ENCODE measurements at regions of chr14 and their contacts with region 1.

Region 1: GRCh38 chr14:74762917-74763802 is at the start of gene YLPM1:
- DNase-seq: peak; percentile 86
- ATAC-seq: peak; percentile 95
- H3K4me3 Mint-ChIP-seq: peak within 1 kb of the TSS; percentile 90
- H3K27ac Mint-ChIP-seq: peak within 1 kb of the TSS; percentile 90
- H3K4me1 Mint-ChIP-seq: peaks cover 55% of the 10 kb centered on the region
- H3K27me3 Mint-ChIP-seq: no peaks in the 10 kb centered on the region
- CTCF ChIP-seq: no peak
- total RNA-seq, gene YLPM1: 68.5 and 85.9 TPM in 2 replicates

Region 2: DNA sequence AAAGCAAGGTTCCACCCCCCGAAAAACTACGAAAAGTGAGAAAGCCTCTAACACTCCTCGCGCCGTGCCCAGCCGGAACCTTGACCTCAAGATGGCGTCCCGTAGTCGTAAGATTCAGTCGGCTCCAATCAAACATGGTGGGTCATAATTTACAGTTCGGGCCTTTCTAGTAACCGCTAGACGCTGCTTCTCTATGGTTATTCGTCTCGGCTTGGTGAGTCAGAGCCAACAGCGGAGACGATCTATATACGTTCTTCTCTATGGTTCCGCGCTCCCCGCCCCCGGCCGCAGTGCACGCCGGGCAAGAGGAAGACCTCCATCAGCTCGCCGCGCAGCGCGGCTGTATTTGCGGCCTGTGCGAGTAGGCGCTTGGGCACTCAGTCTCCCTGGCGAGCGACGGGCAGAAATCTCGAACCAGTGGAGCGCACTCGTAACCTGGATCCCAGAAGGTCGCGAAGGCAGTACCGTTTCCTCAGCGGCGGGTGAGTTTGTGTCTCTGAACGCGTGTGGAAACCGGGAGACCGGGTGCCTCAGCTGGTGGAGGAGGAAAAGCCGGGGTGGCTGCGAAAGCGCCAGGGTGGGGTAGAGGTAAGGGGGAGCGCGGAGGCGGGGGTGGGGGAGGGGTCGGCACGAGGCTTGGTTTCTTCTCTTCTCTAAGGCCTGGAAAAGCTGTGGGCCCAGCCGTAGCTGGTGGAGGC is 1704.8 kb before region 1 on chr14 and contains the start of gene RBM25:
- CTCF ChIA-PET with region 1: no interaction called
- POLR2A ChIA-PET with region 1: no interaction called
- intact Hi-C with region 1: loop called (anchors 5 kb)
- DNase-seq: peak; percentile 90
- ATAC-seq: peak; percentile 93
- H3K4me3 Mint-ChIP-seq: no peak within 1 kb of the TSS
- H3K27ac Mint-ChIP-seq: no peak within 1 kb of the TSS
- H3K4me1 Mint-ChIP-seq: peaks cover 42% of the 10 kb centered on the region
- H3K27me3 Mint-ChIP-seq: no peaks in the 10 kb centered on the region
- CTCF ChIP-seq: no peak
- total RNA-seq, gene RBM25: 114 and 123 TPM in 2 replicates

Region 3: DNA sequence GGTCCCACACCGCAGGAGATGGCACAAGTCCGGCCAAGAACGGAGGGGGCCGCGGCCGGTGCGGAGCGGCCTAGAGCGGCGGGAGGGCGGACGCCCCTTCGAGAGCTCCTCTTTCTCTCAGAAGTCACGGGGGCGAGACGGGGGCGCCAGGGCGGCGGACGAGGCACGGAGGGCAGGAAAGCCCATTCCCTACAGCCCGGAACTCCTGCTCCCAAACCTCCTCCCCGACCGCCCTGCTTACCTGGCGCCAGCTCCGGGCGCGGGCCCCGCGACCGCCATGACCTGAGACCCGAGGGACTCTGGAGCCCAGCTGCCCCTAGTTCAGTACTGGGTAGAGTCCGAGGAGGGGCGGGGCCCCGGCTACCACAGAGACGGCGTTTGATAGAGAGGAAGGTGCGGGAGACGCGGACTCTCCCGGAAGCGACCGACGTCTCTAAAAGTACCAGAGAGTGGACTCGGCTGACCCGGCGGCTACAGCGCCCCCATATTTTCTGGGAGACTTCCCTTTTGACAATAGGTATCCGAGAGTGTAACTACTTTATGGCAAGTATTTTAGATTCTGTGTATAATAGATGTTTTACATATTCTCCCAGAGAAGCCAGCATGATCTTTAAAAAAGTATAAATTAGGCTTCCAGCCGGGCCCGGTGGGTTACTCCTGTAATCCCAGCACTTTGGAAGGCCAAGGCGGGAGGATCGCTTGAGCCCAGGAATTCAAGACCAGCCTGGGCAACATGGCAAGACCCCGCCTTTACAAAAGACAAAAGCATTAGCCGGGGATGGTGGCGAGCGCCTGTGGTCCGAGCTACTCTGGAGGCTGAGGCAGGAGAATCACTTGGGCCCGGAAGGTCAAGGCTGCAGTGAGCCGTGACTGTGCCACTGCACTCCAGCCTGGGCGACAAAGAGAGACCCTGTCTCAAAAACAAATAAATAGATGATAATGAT is 460.3 kb before region 1 on chr14 and contains the start of gene ABCD4:
- CTCF ChIA-PET with region 1: no interaction called
- POLR2A ChIA-PET with region 1: interaction called, 4 read pairs
- intact Hi-C with region 1: loop called (anchors 1 kb)
- DNase-seq: peak; percentile 84
- ATAC-seq: peak; percentile 97
- H3K4me3 Mint-ChIP-seq: peak within 1 kb of the TSS; percentile 96
- H3K27ac Mint-ChIP-seq: peak within 1 kb of the TSS; percentile 94
- H3K4me1 Mint-ChIP-seq: peaks cover 26% of the 10 kb centered on the region
- H3K27me3 Mint-ChIP-seq: no peaks in the 10 kb centered on the region
- CTCF ChIP-seq: no peak
- total RNA-seq, gene ABCD4: 58.2 and 78.4 TPM in 2 replicates

Region 4: DNA sequence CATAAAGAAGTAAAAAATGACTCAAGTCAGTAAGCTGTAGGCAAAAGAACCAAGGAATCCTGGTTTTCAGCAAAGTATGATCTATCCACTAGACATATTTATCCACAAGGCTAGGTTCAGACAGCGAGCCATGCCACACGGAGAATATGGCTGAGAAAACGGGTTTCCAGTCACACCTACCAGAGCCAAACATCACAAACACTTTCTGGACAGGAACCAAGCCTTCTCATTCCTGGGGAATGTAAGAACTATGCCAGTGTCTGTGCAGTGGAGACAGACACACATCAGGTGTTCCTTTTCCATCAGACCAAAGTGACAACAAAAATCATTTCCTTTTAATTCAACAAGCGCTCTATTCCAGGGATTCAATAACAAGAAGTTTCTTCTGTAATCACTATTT is 91.4 kb before region 1 on chr14:
- CTCF ChIA-PET with region 1: no interaction called
- POLR2A ChIA-PET with region 1: no interaction called
- intact Hi-C with region 1: no loop called
- DNase-seq: no peak
- ATAC-seq: no peak
- H3K4me3 Mint-ChIP-seq: no peak overlapping the region
- H3K27ac Mint-ChIP-seq: no peak overlapping the region
- H3K4me1 Mint-ChIP-seq: no peaks in the 10 kb centered on the region
- H3K27me3 Mint-ChIP-seq: no peaks in the 10 kb centered on the region
- CTCF ChIP-seq: no peak

Region 5: DNA sequence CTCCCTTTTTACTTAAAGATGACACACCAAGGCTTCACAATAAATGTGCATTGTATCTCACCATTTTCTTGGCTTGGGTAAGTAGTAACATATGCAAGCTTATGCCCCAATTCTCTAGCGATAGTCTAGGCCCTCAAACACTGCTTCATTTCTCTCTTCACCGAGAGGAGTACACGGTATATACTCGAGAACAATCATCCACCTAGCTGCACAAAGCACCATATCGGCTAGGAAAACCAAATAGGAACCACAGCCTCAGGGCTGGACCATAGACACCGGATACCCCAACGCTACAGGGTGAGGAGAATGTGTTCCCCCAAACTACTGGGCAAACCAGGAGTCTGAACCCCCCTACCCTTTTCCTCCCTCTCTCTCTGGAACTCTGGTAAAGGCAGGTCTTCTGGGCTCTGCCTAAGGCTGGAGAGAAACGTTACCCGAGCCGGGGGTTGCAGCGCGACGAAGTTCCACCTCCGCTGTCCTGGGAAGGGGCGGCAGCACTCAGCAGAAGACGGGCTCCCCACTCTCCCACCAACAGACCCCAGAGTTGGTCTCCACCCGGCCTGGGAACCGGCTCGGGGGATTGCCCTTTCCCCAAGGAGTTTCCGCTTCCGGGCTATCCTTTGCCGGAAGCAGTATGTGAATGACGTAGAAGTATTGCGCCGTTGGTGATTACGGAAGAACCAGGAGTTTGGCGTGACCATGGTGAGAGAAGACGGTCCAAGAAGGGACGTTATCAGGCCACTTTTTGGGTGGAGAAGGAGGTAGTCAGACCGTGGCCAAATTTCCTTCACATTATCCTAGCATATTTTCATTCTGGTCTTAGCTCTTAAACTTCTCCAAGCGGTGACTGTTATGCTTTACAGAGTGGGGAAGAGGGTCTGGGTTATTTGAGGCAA is 50.4 kb before region 1 on chr14 and contains the starts of genes AREL1 and FCF1:
- CTCF ChIA-PET with region 1: interaction called, 4 read pairs
- POLR2A ChIA-PET with region 1: interaction called, 9 read pairs
- intact Hi-C with region 1: loop called (anchors 1 kb)
- DNase-seq: peak; percentile 69
- ATAC-seq: peak; percentile 90
- H3K4me3 Mint-ChIP-seq: peak within 1 kb of the TSS; percentile 95
- H3K27ac Mint-ChIP-seq: peak within 1 kb of the TSS; percentile 92
- H3K4me1 Mint-ChIP-seq: peaks cover 49% of the 10 kb centered on the region
- H3K27me3 Mint-ChIP-seq: no peaks in the 10 kb centered on the region
- CTCF ChIP-seq: no peak
- total RNA-seq, gene AREL1: 46.5 and 49.7 TPM in 2 replicates
- total RNA-seq, gene FCF1: 49.4 and 49.5 TPM in 2 replicates

Region 6: DNA sequence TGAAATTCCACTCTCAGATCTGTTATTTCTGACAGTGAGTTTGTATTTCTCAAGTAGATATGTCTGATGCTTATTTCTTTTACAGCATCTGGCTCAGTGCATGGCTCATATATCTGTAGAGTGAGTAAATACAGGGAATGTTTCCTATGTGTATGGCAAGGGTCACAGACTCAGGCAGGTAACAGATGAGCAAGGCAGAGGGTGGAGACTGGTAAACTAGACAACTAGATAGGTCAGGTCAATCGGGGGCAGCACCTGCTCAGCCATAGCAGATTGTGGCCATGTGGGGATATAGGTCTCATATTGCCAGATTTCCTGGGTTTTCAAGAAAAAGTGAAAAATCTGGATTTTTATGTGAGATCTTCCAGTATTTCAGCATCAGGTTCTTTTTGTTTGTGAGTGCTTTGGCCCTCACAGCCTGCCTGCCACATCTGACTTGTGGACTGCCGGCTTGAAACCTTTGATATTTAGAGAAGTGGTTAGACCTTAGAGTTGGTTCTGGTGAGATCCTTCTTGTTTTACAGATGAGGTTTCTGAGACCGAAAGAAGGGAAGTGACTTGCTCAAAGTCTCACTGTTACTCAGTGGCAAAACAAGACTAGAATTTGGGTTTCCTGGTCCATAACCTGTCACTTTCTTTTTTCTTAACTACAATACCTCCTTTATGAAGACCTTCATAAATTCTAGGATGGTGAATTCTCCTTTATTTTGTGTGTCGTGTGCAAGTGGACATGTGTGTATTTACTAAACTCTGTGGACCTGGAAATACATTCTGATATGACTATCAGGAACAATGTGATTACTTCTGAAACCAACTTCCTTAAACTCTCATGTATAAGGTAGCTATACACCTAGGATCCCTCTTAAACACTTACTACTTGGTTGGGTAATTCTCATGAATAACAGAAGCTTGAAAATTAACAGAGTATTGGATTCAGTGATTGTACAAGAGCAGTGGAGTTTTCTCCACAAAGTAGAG is 78.4 kb after region 1 on chr14:
- CTCF ChIA-PET with region 1: no interaction called
- POLR2A ChIA-PET with region 1: interaction called, 4 read pairs
- intact Hi-C with region 1: loop called (anchors 5 kb)
- DNase-seq: no peak
- ATAC-seq: peak; percentile 84
- H3K4me3 Mint-ChIP-seq: peak overlapping the region; percentile 63
- H3K27ac Mint-ChIP-seq: peak overlapping the region; percentile 93
- H3K4me1 Mint-ChIP-seq: peaks cover 59% of the 10 kb centered on the region
- H3K27me3 Mint-ChIP-seq: no peaks in the 10 kb centered on the region
- CTCF ChIP-seq: no peak

Region 7: GRCh38 chr14:74881431-74882361 is 118.5 kb after region 1 on chr14 and contains the start of gene DLST:
- CTCF ChIA-PET with region 1: interaction called, 4 read pairs
- POLR2A ChIA-PET with region 1: interaction called, 4 read pairs
- intact Hi-C with region 1: loop called (anchors 1 kb)
- DNase-seq: peak; percentile 88
- ATAC-seq: peak; percentile 86
- H3K4me3 Mint-ChIP-seq: peak within 1 kb of the TSS; percentile 99
- H3K27ac Mint-ChIP-seq: peak within 1 kb of the TSS; percentile 97
- H3K4me1 Mint-ChIP-seq: peaks cover 51% of the 10 kb centered on the region
- H3K27me3 Mint-ChIP-seq: no peaks in the 10 kb centered on the region
- CTCF ChIP-seq: no peak
- total RNA-seq, gene DLST: 73.1 and 90.4 TPM in 2 replicates

Region 8: DNA sequence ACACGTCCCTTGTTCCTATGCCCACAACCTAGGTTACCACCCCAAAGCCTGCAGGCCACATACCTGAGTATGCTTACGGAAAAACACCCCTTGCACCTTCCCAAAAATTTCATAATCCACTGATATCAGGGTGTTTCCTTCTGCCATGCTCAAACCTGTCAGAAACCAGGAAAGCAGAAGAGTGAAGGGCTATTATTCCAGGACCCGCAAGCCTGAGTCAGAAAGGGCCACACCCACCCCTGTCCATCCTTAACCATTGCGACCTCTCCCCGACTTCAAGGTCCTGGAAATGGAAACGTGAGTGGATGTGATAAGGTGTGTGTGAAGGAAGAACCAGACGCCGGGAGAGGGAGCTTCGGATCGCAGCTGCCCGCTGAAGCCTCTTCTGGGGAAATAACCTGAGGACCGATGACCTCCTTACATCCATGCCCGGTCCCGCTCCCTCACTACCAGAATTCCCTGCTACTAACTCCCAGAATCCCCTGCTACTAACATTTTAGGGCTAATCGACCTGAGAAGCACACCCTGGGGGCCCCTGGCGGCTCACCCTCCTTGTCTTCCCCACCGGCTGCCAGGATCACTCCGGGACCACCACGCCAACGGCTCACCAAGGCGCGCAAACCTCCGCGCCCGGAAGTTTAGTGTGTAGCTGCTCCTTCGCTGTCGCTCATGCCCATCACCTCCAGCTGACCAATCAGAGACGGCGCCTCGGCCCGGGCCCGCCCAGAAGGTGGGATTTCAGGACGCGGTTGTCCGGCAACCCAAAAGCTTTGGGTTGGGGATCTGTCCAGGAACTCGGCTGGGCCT is 300.4 kb after region 1 on chr14 and contains the start of gene ACYP1:
- CTCF ChIA-PET with region 1: interaction called, 3 read pairs
- POLR2A ChIA-PET with region 1: interaction called, 3 read pairs
- intact Hi-C with region 1: loop called (anchors 5 kb)
- DNase-seq: peak; percentile 90
- ATAC-seq: peak; percentile 99
- H3K4me3 Mint-ChIP-seq: peak within 1 kb of the TSS; percentile 100
- H3K27ac Mint-ChIP-seq: peak within 1 kb of the TSS; percentile 94
- H3K4me1 Mint-ChIP-seq: peaks cover 19% of the 10 kb centered on the region
- H3K27me3 Mint-ChIP-seq: no peaks in the 10 kb centered on the region
- CTCF ChIP-seq: no peak
- total RNA-seq, gene ACYP1: 21.6 and 25.9 TPM in 2 replicates

Measured in activated B cell treated with CpG ODN at 0.5 μM for 24 hours (primary cell).